B cell (primary cell): ENCODE measurements at regions of chr14 and their contacts with region 1.

Region 1: DNA sequence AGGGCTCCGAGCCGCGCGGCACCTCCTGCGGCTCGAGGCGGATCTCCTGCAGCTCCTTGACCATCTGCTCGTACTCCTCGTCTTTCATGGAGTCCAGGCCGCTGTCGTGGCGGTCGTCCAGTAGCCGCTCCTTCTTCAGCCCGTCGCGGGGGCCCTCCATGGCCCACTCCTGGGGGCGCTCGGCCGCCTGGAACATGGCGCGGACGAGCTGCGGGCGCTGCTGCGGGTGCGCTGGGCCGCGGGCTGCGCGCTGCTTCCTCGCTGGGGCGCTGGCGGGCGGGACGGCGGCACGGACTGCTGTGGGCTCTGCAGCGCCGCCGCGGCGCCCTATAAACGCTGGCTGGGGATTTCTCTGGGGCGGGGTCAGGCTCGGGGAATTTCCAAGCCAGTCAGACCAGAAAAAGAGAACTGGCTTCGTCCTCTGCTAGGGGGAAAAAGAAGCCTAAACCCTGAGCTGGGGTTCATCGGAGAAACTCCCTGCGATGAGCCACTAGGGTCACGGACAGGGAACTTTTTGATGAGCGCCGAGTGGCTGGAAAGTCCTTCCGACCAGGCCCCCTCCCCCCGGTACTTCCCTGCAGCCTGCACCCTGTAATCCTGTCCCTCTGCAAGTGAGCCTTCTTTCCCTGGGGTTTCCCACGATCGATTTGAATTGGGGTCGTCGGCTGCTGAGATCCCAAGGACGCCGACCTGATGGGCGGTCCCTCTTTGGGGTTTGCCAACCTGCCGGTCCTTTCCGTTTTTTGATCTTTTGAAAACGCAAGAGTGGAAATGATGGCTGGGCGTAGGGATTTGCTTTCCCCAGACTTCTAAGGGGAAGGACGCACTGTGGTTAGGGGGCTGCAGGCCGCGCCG is at the start of gene NFKBIA:
- DNase-seq: peak; percentile 98
- ATAC-seq: peak; percentile 69
- H3K4me3 ChIP-seq: peak within 1 kb of the TSS; percentile 74 to 99 (median 97)
- H3K4me3 Mint-ChIP-seq: peak within 1 kb of the TSS; percentile 95
- H3K27ac ChIP-seq: peak within 1 kb of the TSS; percentile 96 to 98
- H3K27ac Mint-ChIP-seq: peak within 1 kb of the TSS; percentile 99
- H3K4me1 ChIP-seq: peaks cover 49 to 53% of the 10 kb centered on the region in 2 donors
- H3K4me1 Mint-ChIP-seq: peaks cover 60% of the 10 kb centered on the region
- H3K27me3 ChIP-seq: no peaks in the 10 kb centered on the region
- H3K27me3 Mint-ChIP-seq: no peaks in the 10 kb centered on the region
- CTCF ChIP-seq: peak; percentile 12
- total RNA-seq, gene NFKBIA: 287 and 308 TPM in 2 replicates

Region 2: DNA sequence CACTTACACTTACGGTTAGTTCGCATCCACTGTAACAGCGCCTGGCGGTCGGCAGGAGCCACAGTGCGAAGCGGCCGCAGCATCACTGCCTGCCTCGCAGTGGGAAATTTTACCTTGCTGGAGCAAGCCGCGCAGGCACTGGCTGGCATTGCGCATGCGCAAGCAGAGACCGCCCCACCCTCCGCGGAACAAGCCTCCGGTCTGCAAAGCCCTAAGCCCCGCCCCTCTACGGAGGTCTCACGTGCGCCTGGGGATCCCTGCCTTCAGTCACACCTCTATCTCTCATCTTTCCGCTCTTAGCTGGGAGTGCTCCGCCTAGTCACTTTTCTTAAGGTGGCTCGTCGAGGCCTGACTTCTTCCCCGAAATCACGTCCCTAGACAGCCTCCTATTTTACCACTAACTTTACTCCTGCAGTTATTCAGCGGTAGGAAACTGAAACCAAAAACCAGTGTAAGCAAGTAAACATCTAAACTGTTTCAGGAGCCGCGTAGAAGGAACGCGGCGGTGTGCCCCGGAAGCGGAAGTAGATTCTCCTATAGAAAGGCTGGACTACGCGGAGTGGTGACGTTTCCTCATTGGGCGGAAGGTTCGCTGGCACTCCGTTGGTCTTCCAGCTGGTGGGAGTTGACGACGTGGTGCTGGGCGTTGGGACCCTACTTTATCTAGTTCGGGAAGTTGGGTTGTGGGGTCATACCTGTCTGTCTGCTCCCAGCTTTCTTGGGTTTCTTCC is 422.1 kb before region 1 on chr14 and contains the start of gene SRP54:
- CTCF ChIA-PET with region 1: interaction called, 4 read pairs
- POLR2A ChIA-PET with region 1: interaction called, 11 read pairs
- intact Hi-C with region 1: loop called (anchors 1 kb)
- DNase-seq: peak; percentile 99
- ATAC-seq: peak; percentile 91
- H3K4me3 ChIP-seq: peak within 1 kb of the TSS; percentile 71 to 99 (median 95)
- H3K4me3 Mint-ChIP-seq: no peak within 1 kb of the TSS
- H3K27ac ChIP-seq: peak within 1 kb of the TSS; percentile 95 to 97
- H3K27ac Mint-ChIP-seq: no peak within 1 kb of the TSS
- H3K4me1 ChIP-seq: peaks cover 25 to 26% of the 10 kb centered on the region in 2 donors
- H3K4me1 Mint-ChIP-seq: peaks cover 23% of the 10 kb centered on the region
- H3K27me3 ChIP-seq: no peaks in the 10 kb centered on the region
- H3K27me3 Mint-ChIP-seq: no peaks in the 10 kb centered on the region
- CTCF ChIP-seq: no peak
- total RNA-seq, gene SRP54: 54.9 and 59.5 TPM in 2 replicates

Region 3: DNA sequence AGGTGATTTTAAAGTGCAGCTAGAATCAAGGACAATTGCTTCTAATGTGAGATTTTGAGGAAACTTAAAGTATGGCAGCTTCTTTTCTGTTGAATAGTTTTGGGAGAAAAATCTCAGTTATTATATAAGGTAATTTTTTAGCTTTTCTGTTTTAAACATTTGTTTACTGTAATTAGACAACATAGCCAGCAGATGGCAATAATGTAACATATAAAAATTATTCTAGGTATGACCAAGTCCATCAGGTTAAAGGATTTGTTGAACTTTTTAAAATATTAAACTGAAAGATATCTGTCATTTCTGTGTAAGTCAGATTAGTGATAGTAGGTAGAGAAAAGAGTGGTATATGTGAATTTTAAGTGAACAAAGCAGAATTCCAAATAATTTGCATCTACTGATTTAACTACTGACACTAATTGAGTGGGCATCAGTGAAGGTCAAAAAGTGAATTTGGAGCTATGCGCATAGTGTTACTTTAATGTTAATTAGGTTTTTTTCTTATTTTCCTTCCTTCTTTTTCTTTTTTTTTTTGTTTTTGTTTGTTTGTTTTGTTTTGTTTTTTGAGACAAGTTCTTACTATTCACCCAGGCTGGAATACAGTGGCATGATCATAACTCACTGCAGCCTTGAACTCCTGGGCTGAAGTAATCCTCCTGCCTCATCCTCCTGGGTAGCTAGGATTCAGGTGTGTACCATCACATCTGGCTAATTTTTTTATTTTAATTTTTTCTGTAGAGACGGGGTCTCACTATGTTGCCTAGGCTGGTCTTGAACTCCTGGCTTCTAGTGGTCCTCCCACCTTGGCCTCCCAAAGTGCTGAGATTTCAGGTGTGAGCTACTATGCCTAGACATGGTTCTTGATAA is 263.7 kb before region 1 on chr14:
- CTCF ChIA-PET with region 1: interaction called, 512 read pairs
- POLR2A ChIA-PET with region 1: interaction called, 3 read pairs
- intact Hi-C with region 1: loop called (anchors 1 kb)
- DNase-seq: peak; percentile 29
- ATAC-seq: peak; percentile 41
- H3K4me3 ChIP-seq: no peak overlapping the region
- H3K4me3 Mint-ChIP-seq: no peak overlapping the region
- H3K27ac ChIP-seq: no peak overlapping the region
- H3K27ac Mint-ChIP-seq: no peak overlapping the region
- H3K4me1 ChIP-seq: no peaks in the 10 kb centered on the region
- H3K4me1 Mint-ChIP-seq: no peaks in the 10 kb centered on the region
- H3K27me3 ChIP-seq: no peaks in the 10 kb centered on the region
- H3K27me3 Mint-ChIP-seq: no peaks in the 10 kb centered on the region
- CTCF ChIP-seq: peak; percentile 80

Region 4: DNA sequence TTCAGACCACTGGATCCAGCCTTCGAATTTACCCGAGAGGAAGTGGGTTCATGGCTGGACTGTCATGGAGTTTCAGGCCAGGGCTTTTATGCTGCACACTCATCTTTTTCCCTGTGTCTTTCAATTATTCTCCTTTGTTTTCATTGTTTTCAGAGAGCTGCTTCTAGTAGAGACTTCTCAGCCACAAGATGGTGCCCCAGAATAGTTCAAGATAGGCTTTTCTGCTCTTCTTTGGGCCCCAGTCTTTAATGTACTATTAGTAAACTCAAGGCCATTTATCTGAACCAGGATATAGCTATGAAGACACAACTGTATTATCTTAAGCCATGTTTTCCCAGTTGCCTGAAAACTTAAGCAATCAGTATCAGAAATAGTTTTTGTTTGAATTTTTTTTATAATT is 142.9 kb before region 1 on chr14:
- CTCF ChIA-PET with region 1: interaction called, 25 read pairs
- POLR2A ChIA-PET with region 1: interaction called, 4 read pairs
- intact Hi-C with region 1: loop called (anchors 1 kb)
- DNase-seq: peak; percentile 20
- ATAC-seq: peak; percentile 39
- H3K4me3 ChIP-seq: no peak overlapping the region
- H3K4me3 Mint-ChIP-seq: no peak overlapping the region
- H3K27ac ChIP-seq: no peak overlapping the region
- H3K27ac Mint-ChIP-seq: no peak overlapping the region
- H3K4me1 ChIP-seq: no peaks in the 10 kb centered on the region
- H3K4me1 Mint-ChIP-seq: no peaks in the 10 kb centered on the region
- H3K27me3 ChIP-seq: no peaks in the 10 kb centered on the region
- H3K27me3 Mint-ChIP-seq: no peaks in the 10 kb centered on the region
- CTCF ChIP-seq: peak; percentile 14

Region 5: DNA sequence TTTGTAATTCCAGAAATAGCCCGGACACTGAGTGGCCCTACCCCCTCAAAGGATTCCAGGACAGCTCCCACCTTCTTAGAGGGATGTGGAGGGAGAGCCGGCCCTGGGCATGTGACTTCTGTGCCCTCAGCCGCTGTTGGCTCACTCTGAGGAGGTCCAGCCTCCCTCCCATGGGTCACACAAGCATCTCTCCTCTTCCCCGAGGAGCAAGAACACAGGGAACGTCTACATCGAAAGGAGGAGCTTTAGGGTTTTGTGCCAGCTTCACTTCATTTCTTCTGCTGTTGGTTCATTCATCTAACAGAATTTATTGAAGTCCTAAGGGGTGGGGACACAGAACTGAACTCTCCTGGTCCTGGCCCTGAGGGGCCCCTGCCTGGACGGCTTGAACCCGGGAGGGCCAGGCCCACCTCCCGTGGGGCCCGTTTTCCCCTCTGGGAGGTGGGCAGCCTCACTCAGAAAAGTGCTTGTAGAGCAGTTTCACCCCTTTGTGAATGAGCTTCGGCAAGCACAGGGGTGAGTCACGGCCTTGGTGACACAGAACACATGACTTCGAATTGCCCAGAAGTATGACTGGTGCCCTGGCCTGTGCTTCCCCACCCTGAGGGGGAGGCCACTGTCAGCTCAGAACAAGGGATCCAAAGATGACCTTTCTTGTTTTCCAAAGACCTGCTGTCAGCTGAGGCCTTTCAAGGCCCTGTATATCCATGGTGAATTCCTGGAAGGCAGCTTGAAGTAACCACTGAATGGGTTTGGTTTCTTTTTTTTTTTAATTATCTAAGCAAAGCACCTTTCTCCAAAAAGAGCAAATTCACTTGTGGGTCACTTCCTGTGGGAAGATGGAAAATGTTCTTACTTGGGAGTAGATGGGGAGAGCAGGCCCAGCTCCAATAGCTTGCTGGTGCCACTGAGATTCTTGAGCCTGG is 39.3 kb before region 1 on chr14:
- CTCF ChIA-PET with region 1: interaction called, 4 read pairs
- POLR2A ChIA-PET with region 1: interaction called, 12 read pairs
- intact Hi-C with region 1: loop called (anchors 5 kb)
- DNase-seq: no peak
- ATAC-seq: no peak
- H3K4me3 ChIP-seq: no peak overlapping the region
- H3K4me3 Mint-ChIP-seq: no peak overlapping the region
- H3K27ac ChIP-seq: no peak overlapping the region
- H3K27ac Mint-ChIP-seq: no peak overlapping the region
- H3K4me1 ChIP-seq: peaks cover 26% of the 10 kb centered on the region in 2 donors
- H3K4me1 Mint-ChIP-seq: peaks cover 29% of the 10 kb centered on the region
- H3K27me3 ChIP-seq: no peaks in the 10 kb centered on the region
- H3K27me3 Mint-ChIP-seq: no peaks in the 10 kb centered on the region
- CTCF ChIP-seq: no peak